ENCODE measurements at regions of chr9 and their contacts with region 1.

Region 1: DNA sequence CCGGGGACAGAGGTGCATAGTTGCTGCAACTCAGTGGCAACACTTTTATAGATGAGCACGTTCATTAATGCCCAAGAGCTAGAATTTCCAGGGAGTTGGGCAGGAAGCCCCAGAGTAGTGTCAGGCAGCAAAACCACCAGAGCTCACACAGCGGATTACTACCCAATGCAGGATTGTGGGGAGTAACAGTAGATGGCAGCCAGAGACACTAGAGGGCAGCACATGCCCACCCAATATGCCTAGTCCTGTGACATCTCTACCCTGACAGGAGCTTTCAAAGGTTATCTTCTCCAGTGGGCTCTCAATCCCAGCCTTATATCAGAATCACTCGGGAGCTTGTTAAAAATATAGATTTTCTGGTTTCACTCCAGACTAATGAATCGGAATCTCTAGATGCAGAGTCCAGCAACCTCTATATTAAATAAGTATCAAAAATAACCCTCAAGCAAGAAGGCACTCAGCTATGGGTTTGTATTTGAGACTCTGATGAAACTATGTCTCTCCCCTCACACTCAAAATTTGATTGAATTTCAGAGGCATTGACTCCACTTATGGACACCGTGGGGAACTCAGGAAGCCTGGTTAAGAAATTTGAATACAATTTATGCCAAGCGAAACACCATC is 58.4 kb upstream of the PHF24 start:
- DNase-seq: peak; percentile 39
- ATAC-seq: peak; percentile 100
- H3K4me3 ChIP-seq: no peak overlapping the region
- H3K27ac ChIP-seq: no peak overlapping the region
- H3K4me1 ChIP-seq: no peaks in the 10 kb centered on the region
- H3K27me3 ChIP-seq: no peaks in the 10 kb centered on the region; a peak in 1 of 4 replicates
- CTCF ChIP-seq: peak; percentile 78 to 87 (median 84)
- EP300 ChIP-seq: no peak
- POLR2A ChIP-seq: no peak
- RAD21 ChIP-seq: peak; percentile 91

Region 2: GRCh38 chr9:34989003-34989945 is 89.6 kb after region 1 on chr9 and contains the start of gene DNAJB5:
- CTCF ChIA-PET with region 1: interaction called, 86 read pairs
- POLR2A ChIA-PET with region 1: no interaction called
- RAD21 ChIA-PET with region 1: interaction called, 43 read pairs
- SMC1A ChIA-PET with region 1: interaction called, 54 read pairs
- in situ Hi-C with region 1: loop called (anchors 5 kb)
- intact Hi-C with region 1: loop called (anchors 1 kb)
- DNase-seq: peak; percentile 97
- ATAC-seq: peak; percentile 92
- H3K4me3 ChIP-seq: peak within 1 kb of the TSS; percentile 95
- H3K27ac ChIP-seq: peak within 1 kb of the TSS; percentile 79
- H3K4me1 ChIP-seq: peaks cover 51% of the 10 kb centered on the region
- H3K27me3 ChIP-seq: no peaks in the 10 kb centered on the region
- CTCF ChIP-seq: no peak
- EP300 ChIP-seq: no peak
- POLR2A ChIP-seq: peak; percentile 71
- RAD21 ChIP-seq: no peak
- polyA plus RNA-seq, gene DNAJB5: 0.92 to 1.5 TPM

Region 3: GRCh38 chr9:35051069-35051967 is 151.7 kb after region 1 on chr9:
- CTCF ChIA-PET with region 1: interaction called, 90 read pairs
- POLR2A ChIA-PET with region 1: no interaction called
- RAD21 ChIA-PET with region 1: interaction called, 61 read pairs
- SMC1A ChIA-PET with region 1: interaction called, 49 read pairs
- in situ Hi-C with region 1: loop called (anchors 5 kb)
- intact Hi-C with region 1: loop called (anchors 1 kb)
- DNase-seq: no peak
- ATAC-seq: peak; percentile 93
- H3K4me3 ChIP-seq: no peak overlapping the region
- H3K27ac ChIP-seq: no peak overlapping the region
- H3K4me1 ChIP-seq: no peaks in the 10 kb centered on the region
- H3K27me3 ChIP-seq: no peaks in the 10 kb centered on the region
- CTCF ChIP-seq: peak; percentile 64 to 66 (median 64); a peak in 5 of 6 replicates
- EP300 ChIP-seq: no peak
- POLR2A ChIP-seq: no peak
- RAD21 ChIP-seq: peak; percentile 72

Region 4: GRCh38 chr9:35116898-35117551 is 217.4 kb after region 1 on chr9:
- CTCF ChIA-PET with region 1: interaction called, 10 read pairs
- POLR2A ChIA-PET with region 1: no interaction called
- RAD21 ChIA-PET with region 1: interaction called, 6 read pairs
- SMC1A ChIA-PET with region 1: interaction called, 4 read pairs
- in situ Hi-C with region 1: no loop called
- intact Hi-C with region 1: no loop called
- DNase-seq: no peak
- ATAC-seq: peak; percentile 79
- H3K4me3 ChIP-seq: no peak overlapping the region
- H3K27ac ChIP-seq: no peak overlapping the region
- H3K4me1 ChIP-seq: peaks cover 24% of the 10 kb centered on the region
- H3K27me3 ChIP-seq: no peaks in the 10 kb centered on the region
- CTCF ChIP-seq: peak; percentile 93 to 98 (median 95); a peak in 5 of 6 replicates
- EP300 ChIP-seq: no peak
- POLR2A ChIP-seq: no peak
- RAD21 ChIP-seq: peak; percentile 92

Region 5: DNA sequence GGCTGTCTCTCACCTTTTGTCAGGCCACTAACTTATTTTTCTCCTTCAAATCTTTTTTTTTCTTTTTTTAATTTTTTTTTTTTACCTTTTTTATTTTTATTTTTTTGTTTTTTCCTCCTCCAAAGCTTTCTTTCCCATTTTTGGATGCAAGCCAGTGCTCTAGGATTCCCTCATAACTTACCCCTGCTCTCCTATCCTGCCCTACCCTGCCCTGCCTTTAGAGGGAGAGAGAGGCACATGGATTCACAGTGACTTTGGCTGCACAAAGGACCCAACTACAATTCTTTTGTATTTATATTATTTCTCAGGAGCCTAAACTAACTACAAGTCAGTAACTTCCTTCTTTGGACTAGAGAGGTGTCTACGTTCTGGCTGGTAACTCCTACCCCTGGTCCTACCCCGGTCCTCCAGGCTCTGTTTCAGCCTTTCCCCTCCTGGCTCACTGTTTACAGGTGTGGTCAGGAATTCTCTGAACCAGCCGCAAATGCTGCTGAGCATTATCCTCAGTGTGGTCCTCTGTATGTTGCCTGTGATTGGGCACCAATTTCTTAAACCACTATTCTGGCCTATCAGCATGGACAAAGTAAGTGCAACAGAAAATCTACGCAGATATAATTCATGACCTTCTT is 581.8 kb after region 1 on chr9:
- CTCF ChIA-PET with region 1: interaction called, 19 read pairs
- POLR2A ChIA-PET with region 1: no interaction called
- RAD21 ChIA-PET with region 1: interaction called, 5 read pairs
- SMC1A ChIA-PET with region 1: interaction called, 5 read pairs
- in situ Hi-C with region 1: no loop called
- intact Hi-C with region 1: loop called (anchors 5 kb)
- DNase-seq: no peak
- ATAC-seq: peak; percentile 75
- H3K4me3 ChIP-seq: no peak overlapping the region
- H3K27ac ChIP-seq: no peak overlapping the region
- H3K4me1 ChIP-seq: no peaks in the 10 kb centered on the region
- H3K27me3 ChIP-seq: no peaks in the 10 kb centered on the region
- CTCF ChIP-seq: peak; percentile 57 to 69 (median 64); a peak in 5 of 6 replicates
- EP300 ChIP-seq: no peak
- POLR2A ChIP-seq: no peak
- RAD21 ChIP-seq: peak; percentile 72